Naive thymus-derived CD4-positive, alpha-beta T cell (primary cell): ENCODE measurements at regions of chr3 and their contacts with region 1.

Region 1: GRCh38 chr3:9396700-9397521 is 504 bp upstream of the SETD5 start:
- DNase-seq: peak; percentile 98 to 100 (median 99)
- ATAC-seq: peak; percentile 82
- H3K4me3 ChIP-seq: peak overlapping the region; percentile 85
- H3K4me3 Mint-ChIP-seq: peak overlapping the region; percentile 89 to 100 (median 96)
- H3K27ac ChIP-seq: peak overlapping the region; percentile 82
- H3K27ac Mint-ChIP-seq: peak overlapping the region; percentile 90 to 100 (median 98)
- H3K4me1 ChIP-seq: peaks cover 46 to 55% of the 10 kb centered on the region in 2 donors
- H3K4me1 Mint-ChIP-seq: peaks cover 59 to 80% (median 75%) of the 10 kb centered on the region in 7 donors
- H3K27me3 ChIP-seq: no peaks in the 10 kb centered on the region
- H3K27me3 Mint-ChIP-seq: peaks cover 0 to 2% (median 0%) of the 10 kb centered on the region in 5 donors

Region 2: DNA sequence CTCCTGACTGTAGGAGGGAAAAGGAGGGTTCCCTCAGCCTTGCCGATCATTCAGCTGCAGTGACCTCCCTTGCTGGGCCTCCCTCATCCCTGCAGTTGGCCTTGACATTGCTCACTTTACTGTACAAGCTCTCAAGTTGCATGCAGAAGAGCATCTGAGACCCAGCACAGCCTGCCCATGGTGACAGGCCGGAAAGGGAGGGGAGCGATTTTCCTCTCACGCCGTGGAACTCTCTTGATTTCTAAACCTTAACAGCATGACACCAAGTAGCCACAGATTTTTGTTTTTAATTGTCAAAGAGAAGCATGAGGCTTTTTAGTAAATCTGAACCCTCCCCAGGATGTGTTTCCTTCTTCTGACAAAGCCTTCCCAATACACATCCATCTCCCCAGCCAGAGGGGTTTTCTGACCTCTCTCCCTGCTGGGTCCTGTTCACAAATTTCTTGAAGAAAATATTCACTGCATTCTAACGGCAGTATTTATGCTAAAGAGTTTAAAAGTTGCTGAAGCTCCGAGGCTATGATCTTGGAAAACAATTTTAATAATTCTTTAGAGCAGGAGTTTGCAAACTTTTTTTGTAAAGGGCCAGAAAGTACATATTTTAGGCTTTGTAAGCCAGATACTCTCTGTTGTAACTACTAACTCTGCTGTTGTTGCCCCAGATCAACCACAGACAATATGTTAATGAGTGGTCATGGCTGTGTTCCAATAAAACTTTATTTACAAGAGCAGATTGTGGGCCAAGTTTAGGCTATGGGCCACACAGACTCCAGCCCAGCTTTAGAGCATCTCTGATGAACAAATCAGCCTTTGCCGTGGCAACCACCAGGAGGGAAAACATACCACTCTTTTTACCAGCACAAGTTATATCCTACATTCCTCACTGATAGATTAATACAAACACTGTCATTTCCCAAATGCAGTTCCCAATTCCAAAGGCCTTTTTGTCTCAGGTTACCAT is 860.5 kb before region 1 on chr3:
- CTCF ChIA-PET with region 1: no interaction called
- POLR2A ChIA-PET with region 1: no interaction called
- intact Hi-C with region 1: no loop called
- DNase-seq: no peak
- ATAC-seq: no peak
- H3K4me3 ChIP-seq: no peak overlapping the region
- H3K4me3 Mint-ChIP-seq: no peak overlapping the region
- H3K27ac ChIP-seq: no peak overlapping the region
- H3K27ac Mint-ChIP-seq: no peak overlapping the region
- H3K4me1 ChIP-seq: no peaks in the 10 kb centered on the region
- H3K4me1 Mint-ChIP-seq: no peaks in the 10 kb centered on the region
- H3K27me3 ChIP-seq: no peaks in the 10 kb centered on the region
- H3K27me3 Mint-ChIP-seq: peaks cover 0 to 14% (median 10%) of the 10 kb centered on the region in 5 donors

Region 3: GRCh38 chr3:8963137-8963869 is 433.6 kb before region 1 on chr3 and contains the start of gene RAD18:
- CTCF ChIA-PET with region 1: no interaction called
- POLR2A ChIA-PET with region 1: no interaction called
- intact Hi-C with region 1: loop called (anchors 1 kb)
- DNase-seq: peak; percentile 87 to 95 (median 92)
- ATAC-seq: peak; percentile 97
- H3K4me3 ChIP-seq: peak within 1 kb of the TSS; percentile 80
- H3K4me3 Mint-ChIP-seq: peak within 1 kb of the TSS; percentile 85 to 99 (median 96)
- H3K27ac ChIP-seq: peak within 1 kb of the TSS; percentile 94
- H3K27ac Mint-ChIP-seq: peak within 1 kb of the TSS; percentile 94 to 99 (median 97)
- H3K4me1 ChIP-seq: peaks cover 6 to 10% of the 10 kb centered on the region in 2 donors
- H3K4me1 Mint-ChIP-seq: peaks cover 7 to 45% (median 38%) of the 10 kb centered on the region in 7 donors
- H3K27me3 ChIP-seq: no peaks in the 10 kb centered on the region
- H3K27me3 Mint-ChIP-seq: peaks cover 0 to 8% (median 4%) of the 10 kb centered on the region in 5 donors
- total RNA-seq, gene RAD18: 9.3 to 36.4 (median 18.2) TPM

Region 4: DNA sequence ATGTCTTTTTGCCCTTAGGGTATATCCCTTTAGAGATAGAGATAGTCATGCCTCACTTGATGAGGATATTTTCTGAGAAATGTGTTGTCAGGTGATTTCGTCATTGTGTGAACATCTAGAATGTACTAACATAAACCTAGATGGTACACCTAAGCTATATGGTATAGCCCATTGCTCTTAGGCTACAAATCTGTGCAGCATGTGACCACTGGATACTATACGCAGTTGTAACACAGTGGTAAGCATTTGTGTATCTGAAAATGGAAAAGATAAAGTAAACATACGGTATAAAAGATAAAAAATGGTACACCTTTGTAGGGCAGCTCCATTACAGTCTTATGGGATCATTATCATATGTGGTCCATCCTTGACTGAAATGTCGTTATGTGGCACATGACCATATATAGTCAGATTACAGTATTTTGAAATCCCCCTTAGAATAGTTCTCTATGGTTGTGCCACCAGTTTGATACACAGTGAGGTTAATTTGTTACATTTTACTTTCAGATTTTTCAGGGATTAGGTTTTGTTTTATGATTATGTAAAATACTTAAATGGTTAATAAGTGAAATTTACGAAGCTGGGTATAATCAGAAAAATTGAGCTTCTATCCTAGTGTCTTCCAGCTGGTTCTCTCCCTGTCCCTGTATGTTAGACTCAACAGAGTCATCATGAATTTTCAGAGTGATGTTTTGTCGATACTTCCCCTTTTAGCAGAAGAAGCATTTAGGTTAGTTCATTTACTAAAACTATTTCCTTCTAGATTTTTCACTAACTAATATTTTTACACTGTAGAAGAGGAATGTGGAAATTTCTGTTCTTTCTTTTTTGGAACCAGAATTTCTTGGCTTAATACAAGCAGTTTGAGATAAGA is 13.3 kb after region 1 on chr3:
- CTCF ChIA-PET with region 1: interaction called, 4 read pairs
- POLR2A ChIA-PET with region 1: interaction called, 45 read pairs
- intact Hi-C with region 1: loop called in 1 of 2 experiments (anchors 1 kb)
- DNase-seq: no peak
- ATAC-seq: peak; percentile 63
- H3K4me3 ChIP-seq: no peak overlapping the region
- H3K4me3 Mint-ChIP-seq: peak overlapping the region in 8 of 10 donors; percentile 8 to 67 (median 41)
- H3K27ac ChIP-seq: no peak overlapping the region
- H3K27ac Mint-ChIP-seq: peak overlapping the region in 6 of 9 donors; percentile 23 to 78 (median 55)
- H3K4me1 ChIP-seq: peaks cover 5 to 27% of the 10 kb centered on the region in 2 donors
- H3K4me1 Mint-ChIP-seq: peaks cover 44 to 89% (median 81%) of the 10 kb centered on the region in 7 donors
- H3K27me3 ChIP-seq: no peaks in the 10 kb centered on the region
- H3K27me3 Mint-ChIP-seq: no peaks in the 10 kb centered on the region

Region 5: GRCh38 chr3:9439331-9439730 is 42.4 kb after region 1 on chr3:
- CTCF ChIA-PET with region 1: no interaction called
- POLR2A ChIA-PET with region 1: interaction called, 12 read pairs
- intact Hi-C with region 1: no loop called
- DNase-seq: no peak
- ATAC-seq: no peak
- H3K4me3 ChIP-seq: no peak overlapping the region
- H3K4me3 Mint-ChIP-seq: no peak overlapping the region
- H3K27ac ChIP-seq: no peak overlapping the region
- H3K27ac Mint-ChIP-seq: peak overlapping the region in 2 of 9 donors; percentile 10 to 42
- H3K4me1 ChIP-seq: no peaks in the 10 kb centered on the region
- H3K4me1 Mint-ChIP-seq: peaks cover 0 to 16% (median 9%) of the 10 kb centered on the region in 7 donors
- H3K27me3 ChIP-seq: no peaks in the 10 kb centered on the region
- H3K27me3 Mint-ChIP-seq: no peaks in the 10 kb centered on the region

Region 6: GRCh38 chr3:9659849-9660248 is 262.9 kb after region 1 on chr3:
- CTCF ChIA-PET with region 1: no interaction called
- POLR2A ChIA-PET with region 1: no interaction called
- intact Hi-C with region 1: no loop called
- DNase-seq: no peak
- ATAC-seq: no peak
- H3K4me3 ChIP-seq: no peak overlapping the region
- H3K4me3 Mint-ChIP-seq: no peak overlapping the region
- H3K27ac ChIP-seq: no peak overlapping the region
- H3K27ac Mint-ChIP-seq: peak overlapping the region in 1 of 9 donors; percentile 31
- H3K4me1 ChIP-seq: no peaks in the 10 kb centered on the region
- H3K4me1 Mint-ChIP-seq: peaks cover 6 to 43% (median 26%) of the 10 kb centered on the region in 7 donors
- H3K27me3 ChIP-seq: no peaks in the 10 kb centered on the region
- H3K27me3 Mint-ChIP-seq: no peaks in the 10 kb centered on the region

Region 7: GRCh38 chr3:9749645-9750555 is 353.0 kb after region 1 on chr3 and contains the start of gene OGG1:
- CTCF ChIA-PET with region 1: no interaction called
- POLR2A ChIA-PET with region 1: interaction called, 6 read pairs
- intact Hi-C with region 1: loop called (anchors 1 kb)
- DNase-seq: peak; percentile 77 to 95 (median 94)
- ATAC-seq: peak; percentile 97
- H3K4me3 ChIP-seq: peak within 1 kb of the TSS; percentile 84
- H3K4me3 Mint-ChIP-seq: peak within 1 kb of the TSS; percentile 93 to 98 (median 96)
- H3K27ac ChIP-seq: peak within 1 kb of the TSS; percentile 73
- H3K27ac Mint-ChIP-seq: peak within 1 kb of the TSS; percentile 86 to 96 (median 93)
- H3K4me1 ChIP-seq: peaks cover 13 to 22% of the 10 kb centered on the region in 2 donors
- H3K4me1 Mint-ChIP-seq: peaks cover 30 to 58% (median 47%) of the 10 kb centered on the region in 7 donors
- H3K27me3 ChIP-seq: no peaks in the 10 kb centered on the region
- H3K27me3 Mint-ChIP-seq: no peaks in the 10 kb centered on the region
- total RNA-seq, gene OGG1: 18.8 to 42.9 (median 31.6) TPM

Region 8: DNA sequence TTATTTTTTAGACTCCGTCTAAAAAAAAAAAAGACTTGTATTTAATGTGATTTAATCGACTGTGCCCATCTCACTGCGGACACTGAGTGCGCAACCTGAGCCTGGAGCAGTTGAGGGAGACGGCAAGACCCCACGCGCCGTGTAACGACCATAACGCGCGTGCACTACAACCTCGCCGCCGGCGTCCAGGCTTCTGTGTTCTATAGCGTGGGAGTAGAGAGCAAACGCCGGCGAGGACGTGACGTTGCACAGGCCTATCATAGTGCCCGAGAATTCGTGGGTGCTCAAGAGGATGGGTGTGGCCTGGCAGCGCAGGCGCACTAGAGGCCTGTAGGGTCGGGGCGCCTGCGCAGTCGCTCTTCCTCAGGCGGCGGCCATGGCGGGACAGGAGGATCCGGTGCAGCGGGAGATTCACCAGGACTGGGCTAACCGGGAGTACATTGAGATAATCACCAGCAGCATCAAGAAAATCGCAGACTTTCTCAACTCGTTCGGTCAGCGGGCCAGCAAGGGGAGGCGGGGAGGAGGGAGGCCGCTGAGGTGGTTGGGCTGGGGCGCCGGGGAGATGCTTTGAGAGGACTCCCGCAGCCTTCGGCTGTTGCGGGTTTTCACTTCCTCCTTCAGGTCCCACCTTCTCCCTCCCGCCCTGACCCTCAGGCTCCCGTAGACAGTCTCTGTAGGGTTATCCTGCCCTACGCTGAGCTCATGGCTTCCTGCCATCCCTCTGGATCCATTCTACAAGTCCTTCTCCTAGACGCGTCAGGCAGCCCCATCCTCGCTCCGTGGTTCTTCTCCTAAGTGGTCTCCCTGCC is 718.6 kb after region 1 on chr3 and contains the start of gene BRK1:
- CTCF ChIA-PET with region 1: no interaction called
- POLR2A ChIA-PET with region 1: no interaction called
- intact Hi-C with region 1: loop called in 1 of 2 experiments (anchors 10 kb)
- DNase-seq: peak; percentile 73 to 94 (median 91)
- ATAC-seq: peak; percentile 99
- H3K4me3 ChIP-seq: peak within 1 kb of the TSS; percentile 83
- H3K4me3 Mint-ChIP-seq: peak within 1 kb of the TSS; percentile 91 to 100 (median 98)
- H3K27ac ChIP-seq: peak within 1 kb of the TSS; percentile 85
- H3K27ac Mint-ChIP-seq: peak within 1 kb of the TSS; percentile 92 to 99 (median 98)
- H3K4me1 ChIP-seq: peaks cover 11 to 13% of the 10 kb centered on the region in 2 donors
- H3K4me1 Mint-ChIP-seq: peaks cover 23 to 48% (median 40%) of the 10 kb centered on the region in 7 donors
- H3K27me3 ChIP-seq: no peaks in the 10 kb centered on the region
- H3K27me3 Mint-ChIP-seq: peaks cover 0 to 2% (median 0%) of the 10 kb centered on the region in 5 donors
- total RNA-seq, gene BRK1: 40.9 to 117 (median 65.8) TPM

Region 9: DNA sequence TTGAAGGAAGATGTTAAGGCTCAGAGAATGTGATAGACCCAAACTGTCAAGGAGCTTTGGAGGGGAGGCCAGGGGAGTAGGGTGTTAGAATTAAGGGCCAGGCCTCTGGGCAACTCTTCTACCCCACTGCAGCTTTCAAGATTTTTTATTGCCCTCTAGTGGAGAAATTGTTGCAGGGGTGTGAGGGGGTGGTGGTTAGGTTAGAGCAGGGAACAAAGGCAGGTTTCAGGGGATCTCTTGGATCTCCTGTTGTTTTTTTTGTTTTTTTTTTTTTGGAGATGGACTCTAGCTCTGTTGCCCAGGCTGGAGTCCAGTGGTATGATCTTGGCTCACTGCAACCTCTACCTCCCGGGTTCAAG is 925.4 kb after region 1 on chr3:
- CTCF ChIA-PET with region 1: no interaction called
- POLR2A ChIA-PET with region 1: no interaction called
- intact Hi-C with region 1: loop called (anchors 1 kb)
- DNase-seq: peak in 3 of 9 donors; percentile 12 to 32 (median 17)
- ATAC-seq: no peak
- H3K4me3 ChIP-seq: no peak overlapping the region
- H3K4me3 Mint-ChIP-seq: peak overlapping the region in 5 of 10 donors; percentile 5 to 85 (median 32)
- H3K27ac ChIP-seq: no peak overlapping the region
- H3K27ac Mint-ChIP-seq: peak overlapping the region in 8 of 9 donors; percentile 0 to 97 (median 86)
- H3K4me1 ChIP-seq: peaks cover 12 to 22% of the 10 kb centered on the region in 2 donors
- H3K4me1 Mint-ChIP-seq: peaks cover 5 to 40% (median 30%) of the 10 kb centered on the region in 7 donors
- H3K27me3 ChIP-seq: no peaks in the 10 kb centered on the region
- H3K27me3 Mint-ChIP-seq: peaks cover 0 to 27% (median 9%) of the 10 kb centered on the region in 5 donors